ENCODE measurements at regions of chr12 and their contacts with region 1.

Region 1: GRCh38 chr12:103571286-103571685 is 15.8 kb upstream of the STAB2 start:
- DNase-seq: peak; percentile 19 to 49
- ATAC-seq: peak; percentile 57 to 92 (median 86)
- H3K4me3 ChIP-seq: peak overlapping the region in 4 of 10 donors; percentile 11 to 38 (median 18)
- H3K27ac ChIP-seq: peak overlapping the region in 6 of 10 donors; percentile 3 to 62 (median 20)
- H3K4me1 ChIP-seq: peaks cover 0 to 17% (median 0%) of the 10 kb centered on the region in 9 donors
- H3K27me3 ChIP-seq: peaks cover 0 to 22% (median 0%) of the 10 kb centered on the region in 7 donors
- CTCF ChIP-seq: peak in 1 of 9 donors; percentile 20

Region 2: GRCh38 chr12:103036581-103037214 is 534.6 kb before region 1 on chr12:
- intact Hi-C with region 1: no loop called
- DNase-seq: no peak
- ATAC-seq: no peak
- H3K4me3 ChIP-seq: no peak overlapping the region
- H3K27ac ChIP-seq: no peak overlapping the region
- H3K4me1 ChIP-seq: no peaks in the 10 kb centered on the region
- H3K27me3 ChIP-seq: peaks cover 0 to 7% (median 0%) of the 10 kb centered on the region in 7 donors
- CTCF ChIP-seq: no peak

Region 3: DNA sequence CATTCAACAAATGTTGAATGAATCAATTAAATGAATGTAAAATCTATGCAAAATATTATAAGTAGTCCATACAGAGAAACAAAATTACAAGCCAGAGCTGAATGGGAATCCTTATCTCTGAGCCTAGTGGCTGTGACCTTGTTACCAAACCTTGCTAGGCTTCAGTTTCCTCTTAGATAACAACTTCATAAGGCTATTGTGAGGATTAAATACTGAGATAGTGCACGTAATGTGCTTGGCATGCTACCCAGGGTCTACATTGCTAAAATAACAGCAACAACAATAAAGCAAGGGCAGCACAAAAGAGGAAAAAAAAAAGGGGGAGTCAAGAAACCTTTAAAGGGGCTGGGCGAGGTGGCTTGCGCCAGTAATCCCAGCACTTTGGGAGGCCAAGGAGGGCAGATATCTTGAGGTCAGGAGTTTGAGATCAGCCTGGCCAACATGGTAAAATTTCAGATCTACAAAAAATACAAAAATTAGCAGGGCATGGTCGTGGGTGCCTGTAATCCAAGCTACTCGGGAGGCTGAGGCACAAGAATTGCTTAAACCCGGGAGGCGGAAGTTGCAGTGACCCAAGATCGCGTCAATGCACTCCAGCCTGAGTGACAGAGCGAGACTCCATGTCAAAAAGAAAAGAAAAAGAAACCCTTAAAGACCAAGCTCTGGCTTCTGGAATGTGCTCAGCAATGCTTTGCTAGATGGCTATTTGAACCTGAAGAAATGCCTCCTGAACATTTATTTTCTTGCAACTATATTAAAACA is 29.9 kb after region 1 on chr12:
- intact Hi-C with region 1: no loop called
- DNase-seq: no peak
- ATAC-seq: peak in 1 of 8 donors; percentile 37
- H3K4me3 ChIP-seq: no peak overlapping the region
- H3K27ac ChIP-seq: no peak overlapping the region
- H3K4me1 ChIP-seq: no peaks in the 10 kb centered on the region
- H3K27me3 ChIP-seq: no peaks in the 10 kb centered on the region
- CTCF ChIP-seq: no peak

Region 4: GRCh38 chr12:103632554-103633216 is 61.4 kb after region 1 on chr12:
- intact Hi-C with region 1: loop called in 2 of 10 experiments (anchors 2 to 10 kb)
- DNase-seq: no peak
- ATAC-seq: peak in 2 of 8 donors; percentile 20 to 35
- H3K4me3 ChIP-seq: no peak overlapping the region
- H3K27ac ChIP-seq: no peak overlapping the region
- H3K4me1 ChIP-seq: peaks cover 0 to 7% (median 0%) of the 10 kb centered on the region in 9 donors
- H3K27me3 ChIP-seq: no peaks in the 10 kb centered on the region
- CTCF ChIP-seq: peak in 7 of 9 donors; percentile 41 to 70 (median 56)